SK-N-SH (cell line): ENCODE measurements at regions of chr6 and their contacts with region 1.

Region 1: DNA sequence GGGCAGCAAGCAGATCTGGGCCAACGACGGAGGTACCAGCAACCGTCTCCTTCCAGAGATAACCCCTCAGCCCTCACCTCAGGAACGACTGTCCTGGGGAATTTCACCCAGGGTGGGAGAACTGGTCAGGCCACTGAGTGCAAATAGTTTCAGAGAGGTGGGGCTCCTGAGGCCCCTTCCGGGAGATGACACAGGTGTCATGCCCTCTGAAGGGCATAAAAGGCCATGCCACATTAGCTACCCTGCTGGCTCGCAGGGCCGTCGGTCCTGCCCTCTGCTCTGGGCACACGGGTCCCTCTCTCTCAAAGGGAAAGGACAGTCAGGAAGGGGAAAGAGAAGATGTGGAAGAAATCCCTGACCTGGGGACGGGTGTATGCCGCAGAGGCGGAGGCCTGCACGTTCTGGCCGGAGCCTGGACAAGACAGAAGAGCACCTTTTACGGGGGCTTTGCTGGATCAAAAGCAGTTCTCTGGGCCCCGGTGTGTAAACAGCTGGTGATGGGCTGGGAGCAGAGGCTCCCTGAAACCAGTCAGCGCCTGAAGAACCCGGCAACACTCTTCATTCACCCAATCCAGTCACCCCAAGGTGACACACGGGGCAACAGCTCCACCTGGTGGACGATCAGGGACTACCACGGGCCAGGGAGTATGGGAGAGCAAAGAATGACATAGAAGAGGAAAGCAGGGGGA is 6.4 kb upstream of the TAF8 start:
- DNase-seq: peak; percentile 92
- H3K4me3 ChIP-seq: no peak overlapping the region; a peak in 1 of 4 replicates
- H3K27ac ChIP-seq: no peak overlapping the region
- H3K4me1 ChIP-seq: peaks cover 8 to 12% of the 10 kb centered on the region in 2 experiments; a peak in 2 of 4 replicates
- H3K27me3 ChIP-seq: no peaks in the 10 kb centered on the region
- CTCF ChIP-seq: peak; percentile 97
- EP300 ChIP-seq: no peak
- RAD21 ChIP-seq: peak; percentile 99

Region 2: DNA sequence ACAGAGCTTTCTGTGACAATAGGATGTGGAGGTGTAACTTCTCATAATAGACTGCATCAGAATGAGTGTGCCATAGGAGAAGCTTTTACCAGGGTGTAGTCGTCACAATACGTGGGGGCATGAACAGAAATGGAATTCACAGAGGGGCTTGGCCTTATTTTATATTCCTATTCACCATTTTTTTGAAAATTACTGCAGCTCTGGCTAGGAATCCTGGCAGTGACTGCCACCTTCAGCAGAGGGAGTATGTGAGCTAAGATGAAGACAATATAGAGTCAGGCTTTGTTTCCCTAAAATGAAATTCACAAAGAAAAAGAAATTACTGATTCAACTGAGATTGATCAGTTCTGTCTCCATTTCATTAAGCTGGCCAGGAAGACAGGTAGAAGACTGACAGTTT is 242.6 kb before region 1 on chr6:
- CTCF ChIA-PET with region 1: interaction called, 49 read pairs
- POLR2A ChIA-PET with region 1: no interaction called
- DNase-seq: no peak
- H3K4me3 ChIP-seq: no peak overlapping the region
- H3K27ac ChIP-seq: no peak overlapping the region
- H3K4me1 ChIP-seq: no peaks in the 10 kb centered on the region
- H3K27me3 ChIP-seq: no peaks in the 10 kb centered on the region
- CTCF ChIP-seq: peak; percentile 76
- EP300 ChIP-seq: no peak
- RAD21 ChIP-seq: peak; percentile 61

Region 3: GRCh38 chr6:41846666-41847237 is 197.2 kb before region 1 on chr6:
- CTCF ChIA-PET with region 1: interaction called, 14 read pairs
- POLR2A ChIA-PET with region 1: no interaction called
- DNase-seq: peak; percentile 70
- H3K4me3 ChIP-seq: no peak overlapping the region
- H3K27ac ChIP-seq: peak overlapping the region; percentile 83 to 86
- H3K4me1 ChIP-seq: no peaks in the 10 kb centered on the region
- H3K27me3 ChIP-seq: no peaks in the 10 kb centered on the region
- CTCF ChIP-seq: peak; percentile 88
- EP300 ChIP-seq: no peak
- RAD21 ChIP-seq: peak; percentile 84

Region 4: DNA sequence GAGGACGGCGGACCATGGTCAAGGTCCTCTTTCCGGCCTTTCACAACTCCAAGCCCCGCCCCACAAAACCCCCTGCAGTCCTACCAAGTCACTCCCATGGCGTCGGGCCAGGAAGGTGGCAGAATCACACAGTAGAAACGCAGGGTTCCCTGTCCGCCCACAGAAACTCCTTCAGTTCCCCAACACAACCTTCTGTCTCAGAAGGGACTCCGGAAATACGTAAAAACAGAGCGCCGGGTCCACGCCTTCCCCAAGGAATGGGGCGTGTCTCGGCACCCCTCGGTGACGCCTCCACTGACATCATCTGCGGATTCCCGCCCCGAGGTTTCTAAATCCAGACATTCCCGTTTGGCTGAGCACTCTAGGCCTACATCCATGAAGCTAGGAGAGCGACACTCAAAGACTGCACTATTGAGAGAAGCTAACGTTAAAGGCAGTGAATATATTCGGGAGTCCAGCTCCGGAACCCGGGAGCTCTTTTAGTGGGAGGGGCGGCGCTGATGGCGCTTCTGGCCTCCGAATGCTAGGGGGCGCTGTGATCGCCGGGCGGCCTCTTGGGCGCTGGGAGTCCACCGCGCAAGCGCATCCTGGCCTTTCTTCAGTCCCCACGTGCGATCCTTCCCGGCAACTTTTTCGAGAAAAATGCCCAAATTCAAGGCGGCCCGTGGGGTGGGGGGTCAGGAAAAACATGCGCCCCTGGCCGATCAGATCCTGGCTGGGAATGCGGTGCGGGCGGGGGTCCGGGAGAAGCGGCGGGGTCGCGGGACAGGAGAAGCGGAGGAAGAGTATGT is 122.8 kb before region 1 on chr6 and contains the starts of genes BYSL and MED20:
- CTCF ChIA-PET with region 1: interaction called, 35 read pairs
- POLR2A ChIA-PET with region 1: interaction called, 6 read pairs
- DNase-seq: peak; percentile 95
- H3K4me3 ChIP-seq: peak within 1 kb of the TSS; percentile 55 to 99
- H3K27ac ChIP-seq: peak within 1 kb of the TSS; percentile 96 to 99
- H3K4me1 ChIP-seq: peaks cover 14 to 18% of the 10 kb centered on the region in 2 experiments; a peak in 3 of 4 replicates
- H3K27me3 ChIP-seq: no peaks in the 10 kb centered on the region
- CTCF ChIP-seq: peak; percentile 97
- EP300 ChIP-seq: no peak
- RAD21 ChIP-seq: no peak; the same call in 1 of the 2 replicates
- polyA plus RNA-seq, gene BYSL: 31.1 and 56.0 TPM in 2 replicates
- polyA plus RNA-seq, gene MED20: 25.1 and 29.6 TPM in 2 replicates

Region 5: DNA sequence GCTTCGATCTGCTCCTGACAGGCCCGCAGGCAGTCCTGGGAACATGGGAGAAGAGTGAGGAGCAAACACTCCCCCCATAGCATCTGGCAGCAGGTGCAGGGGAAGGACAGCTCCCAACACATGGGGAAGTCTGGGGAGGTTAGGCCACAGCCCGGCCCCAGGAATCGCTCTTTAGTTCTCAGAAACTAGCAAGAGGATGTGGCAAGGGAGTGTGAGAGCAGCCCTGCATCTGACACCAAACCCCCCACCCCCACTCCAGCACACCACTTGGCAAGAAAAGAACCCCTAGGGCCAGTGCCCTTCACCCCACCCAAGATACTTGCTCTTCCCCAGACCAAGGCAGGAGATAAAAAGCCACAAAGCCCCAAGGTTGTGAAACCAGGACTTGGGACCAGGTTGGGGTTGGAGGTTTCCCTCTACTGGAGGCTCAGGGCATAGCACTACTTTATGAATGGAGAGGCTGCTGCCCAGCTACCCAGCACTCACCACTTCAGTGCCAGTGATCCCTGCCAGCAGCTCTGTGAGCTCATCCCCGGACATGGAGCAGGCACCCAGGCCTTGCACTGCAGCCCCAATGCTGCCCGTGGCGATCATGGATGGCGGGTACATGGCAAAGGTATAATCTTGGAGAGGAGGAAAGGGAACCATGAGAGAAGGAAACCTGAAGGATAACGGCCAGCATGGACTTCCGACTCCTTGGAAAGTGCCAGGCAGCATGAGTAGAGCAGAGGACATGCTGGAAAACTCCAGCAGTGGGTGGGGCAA is 107.7 kb before region 1 on chr6:
- CTCF ChIA-PET with region 1: interaction called, 96 read pairs
- POLR2A ChIA-PET with region 1: interaction called, 3 read pairs
- DNase-seq: peak; percentile 83
- H3K4me3 ChIP-seq: peak overlapping the region in 1 of 2 experiments; percentile 14; a peak in 1 of 4 replicates
- H3K27ac ChIP-seq: peak overlapping the region; percentile 46 to 50; a peak in 3 of 4 replicates
- H3K4me1 ChIP-seq: peaks cover 19 to 22% of the 10 kb centered on the region in 2 experiments; a peak in 3 of 4 replicates
- H3K27me3 ChIP-seq: no peaks in the 10 kb centered on the region
- CTCF ChIP-seq: peak; percentile 79
- EP300 ChIP-seq: no peak
- RAD21 ChIP-seq: peak; percentile 72

Region 6: GRCh38 chr6:41941280-41942066 is 102.5 kb before region 1 on chr6 and contains the start of gene CCND3:
- CTCF ChIA-PET with region 1: interaction called, 96 read pairs
- POLR2A ChIA-PET with region 1: interaction called, 3 read pairs
- DNase-seq: peak; percentile 95
- H3K4me3 ChIP-seq: peak within 1 kb of the TSS; percentile 92 to 95
- H3K27ac ChIP-seq: peak within 1 kb of the TSS; percentile 69 to 78
- H3K4me1 ChIP-seq: peaks cover 18 to 23% of the 10 kb centered on the region in 2 experiments; a peak in 3 of 4 replicates
- H3K27me3 ChIP-seq: no peaks in the 10 kb centered on the region
- CTCF ChIP-seq: no peak
- EP300 ChIP-seq: no peak
- RAD21 ChIP-seq: no peak
- polyA plus RNA-seq, gene CCND3: 22.4 and 26.6 TPM in 2 replicates

Region 7: GRCh38 chr6:42028234-42029061 is 15.5 kb before region 1 on chr6:
- CTCF ChIA-PET with region 1: interaction called, 20 read pairs
- POLR2A ChIA-PET with region 1: interaction called, 3 read pairs
- DNase-seq: no peak
- H3K4me3 ChIP-seq: no peak overlapping the region
- H3K27ac ChIP-seq: peak overlapping the region in 1 of 2 experiments; percentile 5; a peak in 1 of 4 replicates
- H3K4me1 ChIP-seq: peaks cover 6 to 12% of the 10 kb centered on the region in 2 experiments; a peak in 3 of 4 replicates
- H3K27me3 ChIP-seq: no peaks in the 10 kb centered on the region
- CTCF ChIP-seq: no peak
- EP300 ChIP-seq: no peak
- RAD21 ChIP-seq: no peak